AG04449 (cell line): ENCODE measurements at regions of chr6 and their contacts with region 1.

Region 1: GRCh38 chr6:37791156-37791919 is 28.2 kb upstream of the ZFAND3 start:
- DNase-seq: peak; percentile 85
- H3K4me3 ChIP-seq: no peak overlapping the region
- CTCF ChIP-seq: peak; percentile 98

Region 2: GRCh38 chr6:37731888-37732287 is 59.5 kb before region 1 on chr6:
- CTCF ChIA-PET with region 1: no interaction called
- POLR2A ChIA-PET with region 1: no interaction called
- DNase-seq: no peak
- H3K4me3 ChIP-seq: no peak overlapping the region
- CTCF ChIP-seq: no peak

Region 3: DNA sequence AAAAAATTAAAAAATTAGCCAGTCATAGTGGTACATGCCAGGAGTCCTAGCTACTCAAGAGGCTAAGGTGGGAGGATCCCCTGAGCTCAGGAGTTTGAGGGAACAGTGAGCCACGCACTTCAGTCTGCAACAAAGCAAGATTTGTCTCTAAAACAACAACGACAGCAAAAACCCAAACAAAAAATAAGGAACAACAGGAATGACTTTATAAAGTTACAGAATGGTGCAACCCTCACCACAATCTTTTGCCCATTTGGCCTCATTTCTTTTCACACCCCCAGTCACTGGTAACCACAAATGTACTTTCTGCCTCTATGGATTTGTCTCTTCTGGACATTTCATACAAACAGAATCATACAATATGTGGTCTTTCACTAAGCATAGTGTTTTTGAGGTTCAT is 11.5 kb after region 1 on chr6:
- CTCF ChIA-PET with region 1: interaction called, 17 read pairs
- POLR2A ChIA-PET with region 1: no interaction called
- DNase-seq: no peak
- H3K4me3 ChIP-seq: no peak overlapping the region
- CTCF ChIP-seq: no peak